ENCODE measurements at regions of chr22 and their contacts with region 1.

Region 1: DNA sequence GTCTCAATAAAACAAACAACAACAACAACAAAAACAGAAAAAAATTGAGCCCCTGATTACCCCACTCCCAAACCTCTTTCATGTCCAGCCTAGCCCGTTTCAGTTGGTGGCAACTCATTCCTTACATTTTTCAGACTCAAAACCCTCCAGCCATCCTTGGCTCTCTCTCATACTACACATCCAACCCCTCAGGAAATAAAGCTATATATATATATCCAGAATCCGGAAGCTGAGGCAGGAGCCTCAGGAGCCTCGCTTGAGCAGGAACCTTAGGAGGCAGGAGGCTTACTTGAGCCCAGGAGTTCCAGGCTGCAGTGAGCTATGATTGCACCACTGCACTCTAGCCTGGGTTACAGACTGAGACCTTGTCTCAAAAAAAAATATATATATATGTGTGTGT is 54.7 kb downstream of the RBX1 start:
- DNase-seq: no peak
- ATAC-seq: no peak
- H3K4me3 ChIP-seq: no peak overlapping the region
- H3K4me3 Mint-ChIP-seq: no peak overlapping the region
- H3K27ac ChIP-seq: no peak overlapping the region
- H3K27ac Mint-ChIP-seq: no peak overlapping the region
- H3K4me1 ChIP-seq: no peaks in the 10 kb centered on the region
- H3K4me1 Mint-ChIP-seq: no peaks in the 10 kb centered on the region
- H3K27me3 ChIP-seq: no peaks in the 10 kb centered on the region
- H3K27me3 Mint-ChIP-seq: no peaks in the 10 kb centered on the region
- CTCF ChIP-seq: no peak

Region 2: DNA sequence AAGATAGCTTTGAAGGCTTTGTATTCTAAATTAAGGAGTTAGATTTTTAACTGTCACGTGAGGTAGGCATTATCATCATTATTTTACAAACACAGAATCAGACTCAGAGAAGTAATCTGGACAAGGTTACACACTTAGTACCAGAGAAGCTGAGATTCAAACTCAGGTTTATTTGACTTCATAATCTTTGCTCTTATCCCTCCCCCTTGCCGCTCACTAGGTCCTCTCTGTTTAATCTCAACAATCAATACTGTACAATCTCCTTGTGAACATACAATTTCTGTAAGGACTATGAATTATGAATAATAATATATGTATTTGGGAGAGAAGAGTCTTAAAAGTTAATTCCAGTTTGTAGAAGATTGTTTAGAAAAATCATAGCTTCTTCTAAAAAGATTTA is 138.8 kb before region 1 on chr22:
- CTCF ChIA-PET with region 1: no interaction called
- POLR2A ChIA-PET with region 1: no interaction called
- intact Hi-C with region 1: no loop called
- DNase-seq: no peak
- ATAC-seq: no peak
- H3K4me3 ChIP-seq: no peak overlapping the region
- H3K4me3 Mint-ChIP-seq: no peak overlapping the region
- H3K27ac ChIP-seq: no peak overlapping the region
- H3K27ac Mint-ChIP-seq: no peak overlapping the region
- H3K4me1 ChIP-seq: peaks cover 5 to 9% of the 10 kb centered on the region in 2 donors
- H3K4me1 Mint-ChIP-seq: peaks cover 16% of the 10 kb centered on the region
- H3K27me3 ChIP-seq: no peaks in the 10 kb centered on the region
- H3K27me3 Mint-ChIP-seq: no peaks in the 10 kb centered on the region
- CTCF ChIP-seq: no peak

Region 3: DNA sequence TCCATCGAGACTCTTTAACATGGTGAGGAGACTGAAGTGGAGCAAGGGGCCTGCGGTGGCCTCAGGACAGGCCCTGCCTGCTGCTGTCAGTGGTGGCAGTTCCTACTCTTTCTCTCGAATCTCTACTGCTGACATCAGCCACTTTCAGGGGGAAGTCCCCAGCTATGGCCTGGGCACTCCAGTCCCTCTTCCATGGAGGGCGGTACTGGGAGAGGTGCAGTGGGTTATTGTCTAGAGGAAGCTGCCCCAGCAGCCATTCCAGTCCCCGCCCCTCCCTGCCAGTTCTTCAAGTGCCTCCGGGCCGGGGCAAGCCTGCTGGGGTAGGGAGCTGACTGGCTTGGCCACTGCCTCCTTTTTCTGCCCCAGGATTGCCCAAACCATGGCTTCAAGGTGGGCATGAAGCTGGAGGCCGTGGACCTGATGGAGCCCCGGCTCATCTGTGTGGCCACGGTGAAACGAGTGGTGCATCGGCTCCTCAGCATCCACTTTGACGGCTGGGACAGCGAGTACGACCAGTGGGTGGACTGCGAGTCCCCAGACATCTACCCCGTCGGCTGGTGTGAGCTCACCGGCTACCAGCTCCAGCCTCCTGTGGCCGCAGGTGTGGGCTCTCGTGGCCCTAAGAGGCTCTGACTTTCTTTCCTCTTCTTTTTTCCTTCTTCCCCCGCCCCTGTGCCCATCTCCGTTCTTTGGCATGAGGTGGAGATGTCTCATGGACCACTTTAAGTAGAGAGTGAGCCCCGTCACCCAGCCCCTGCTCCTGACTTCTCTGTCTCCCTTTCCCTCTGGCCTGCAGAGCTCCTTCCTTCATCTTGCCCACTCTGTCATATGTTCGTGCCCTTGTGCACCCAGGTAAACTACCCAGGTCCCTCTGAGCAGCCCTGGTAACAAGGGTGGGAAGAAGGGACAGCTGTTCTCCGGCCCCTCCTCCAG is 221.1 kb after region 1 on chr22:
- CTCF ChIA-PET with region 1: no interaction called
- POLR2A ChIA-PET with region 1: no interaction called
- intact Hi-C with region 1: no loop called
- DNase-seq: no peak
- ATAC-seq: no peak
- H3K4me3 ChIP-seq: no peak overlapping the region
- H3K4me3 Mint-ChIP-seq: no peak overlapping the region
- H3K27ac ChIP-seq: no peak overlapping the region
- H3K27ac Mint-ChIP-seq: no peak overlapping the region
- H3K4me1 ChIP-seq: no peaks in the 10 kb centered on the region
- H3K4me1 Mint-ChIP-seq: no peaks in the 10 kb centered on the region
- H3K27me3 ChIP-seq: no peaks in the 10 kb centered on the region
- H3K27me3 Mint-ChIP-seq: no peaks in the 10 kb centered on the region
- CTCF ChIP-seq: no peak

Region 4: GRCh38 chr22:42180349-42180842 is 1174.5 kb after region 1 on chr22:
- CTCF ChIA-PET with region 1: no interaction called
- POLR2A ChIA-PET with region 1: interaction called, 10 read pairs
- intact Hi-C with region 1: no loop called
- DNase-seq: no peak
- ATAC-seq: no peak
- H3K4me3 ChIP-seq: no peak overlapping the region
- H3K4me3 Mint-ChIP-seq: no peak overlapping the region
- H3K27ac ChIP-seq: no peak overlapping the region
- H3K27ac Mint-ChIP-seq: no peak overlapping the region
- H3K4me1 ChIP-seq: no peaks in the 10 kb centered on the region
- H3K4me1 Mint-ChIP-seq: peaks cover 32% of the 10 kb centered on the region
- H3K27me3 ChIP-seq: no peaks in the 10 kb centered on the region
- H3K27me3 Mint-ChIP-seq: no peaks in the 10 kb centered on the region
- CTCF ChIP-seq: no peak